ENCODE measurements at regions of chr10 and their contacts with region 1.

Region 1: GRCh38 chr10:132446661-132447194 is 49.7 kb downstream of the PWWP2B start:
- DNase-seq: peak; percentile 91
- H3K4me3 Mint-ChIP-seq: peak overlapping the region; percentile 67
- H3K27ac Mint-ChIP-seq: peak overlapping the region; percentile 94
- H3K4me1 Mint-ChIP-seq: peaks cover 30% of the 10 kb centered on the region
- H3K27me3 Mint-ChIP-seq: no peaks in the 10 kb centered on the region

Region 2: GRCh38 chr10:131694781-131695495 is 751.8 kb before region 1 on chr10:
- CTCF ChIA-PET with region 1: no interaction called
- POLR2A ChIA-PET with region 1: no interaction called
- intact Hi-C with region 1: no loop called
- DNase-seq: no peak
- H3K4me3 Mint-ChIP-seq: no peak overlapping the region
- H3K27ac Mint-ChIP-seq: no peak overlapping the region
- H3K4me1 Mint-ChIP-seq: no peaks in the 10 kb centered on the region
- H3K27me3 Mint-ChIP-seq: peaks cover 3% of the 10 kb centered on the region

Region 3: DNA sequence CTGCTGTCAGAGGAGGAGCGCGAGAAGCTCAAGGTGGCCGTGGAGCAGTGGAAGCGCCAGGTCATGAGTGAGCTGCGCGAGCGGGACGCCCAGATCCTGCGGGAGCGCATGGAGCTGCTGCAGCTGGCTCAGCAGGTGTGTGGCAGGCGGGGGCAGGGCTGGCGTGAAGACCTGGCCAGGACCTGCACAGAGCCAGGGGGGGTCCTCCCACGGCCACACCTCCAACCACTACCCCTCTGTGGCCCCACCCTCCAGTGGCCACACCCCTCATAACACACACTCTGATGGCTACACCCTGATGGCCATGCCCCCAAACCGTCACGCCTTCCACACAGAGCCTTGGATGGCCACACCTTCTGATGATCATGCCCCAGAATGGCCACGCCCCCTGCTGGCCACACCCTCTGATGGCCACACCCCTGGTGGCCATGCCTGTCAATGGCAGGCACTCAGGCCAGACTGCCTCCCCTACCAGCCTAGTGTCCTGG is 283.4 kb before region 1 on chr10:
- CTCF ChIA-PET with region 1: no interaction called
- POLR2A ChIA-PET with region 1: no interaction called
- intact Hi-C with region 1: loop called (anchors 2 kb)
- DNase-seq: peak; percentile 80
- H3K4me3 Mint-ChIP-seq: no peak overlapping the region
- H3K27ac Mint-ChIP-seq: peak overlapping the region; percentile 9
- H3K4me1 Mint-ChIP-seq: peaks cover 30% of the 10 kb centered on the region
- H3K27me3 Mint-ChIP-seq: no peaks in the 10 kb centered on the region

Region 4: GRCh38 chr10:132307823-132308587 is 138.7 kb before region 1 on chr10 and contains the start of gene STK32C:
- CTCF ChIA-PET with region 1: interaction called, 3 read pairs
- POLR2A ChIA-PET with region 1: no interaction called
- intact Hi-C with region 1: loop called (anchors 2 kb)
- DNase-seq: peak; percentile 93
- H3K4me3 Mint-ChIP-seq: peak within 1 kb of the TSS; percentile 85
- H3K27ac Mint-ChIP-seq: no peak within 1 kb of the TSS
- H3K4me1 Mint-ChIP-seq: peaks cover 11% of the 10 kb centered on the region
- H3K27me3 Mint-ChIP-seq: peaks cover 3% of the 10 kb centered on the region
- total RNA-seq, gene STK32C: 14.8 to 16.1 TPM

Region 5: GRCh38 chr10:132387764-132388210 is 58.9 kb before region 1 on chr10:
- CTCF ChIA-PET with region 1: no interaction called
- POLR2A ChIA-PET with region 1: interaction called, 3 read pairs
- intact Hi-C with region 1: loop called (anchors 1 kb)
- DNase-seq: peak; percentile 81
- H3K4me3 Mint-ChIP-seq: peak overlapping the region; percentile 60
- H3K27ac Mint-ChIP-seq: peak overlapping the region; percentile 79
- H3K4me1 Mint-ChIP-seq: peaks cover 3% of the 10 kb centered on the region
- H3K27me3 Mint-ChIP-seq: peaks cover 2% of the 10 kb centered on the region

Region 6: DNA sequence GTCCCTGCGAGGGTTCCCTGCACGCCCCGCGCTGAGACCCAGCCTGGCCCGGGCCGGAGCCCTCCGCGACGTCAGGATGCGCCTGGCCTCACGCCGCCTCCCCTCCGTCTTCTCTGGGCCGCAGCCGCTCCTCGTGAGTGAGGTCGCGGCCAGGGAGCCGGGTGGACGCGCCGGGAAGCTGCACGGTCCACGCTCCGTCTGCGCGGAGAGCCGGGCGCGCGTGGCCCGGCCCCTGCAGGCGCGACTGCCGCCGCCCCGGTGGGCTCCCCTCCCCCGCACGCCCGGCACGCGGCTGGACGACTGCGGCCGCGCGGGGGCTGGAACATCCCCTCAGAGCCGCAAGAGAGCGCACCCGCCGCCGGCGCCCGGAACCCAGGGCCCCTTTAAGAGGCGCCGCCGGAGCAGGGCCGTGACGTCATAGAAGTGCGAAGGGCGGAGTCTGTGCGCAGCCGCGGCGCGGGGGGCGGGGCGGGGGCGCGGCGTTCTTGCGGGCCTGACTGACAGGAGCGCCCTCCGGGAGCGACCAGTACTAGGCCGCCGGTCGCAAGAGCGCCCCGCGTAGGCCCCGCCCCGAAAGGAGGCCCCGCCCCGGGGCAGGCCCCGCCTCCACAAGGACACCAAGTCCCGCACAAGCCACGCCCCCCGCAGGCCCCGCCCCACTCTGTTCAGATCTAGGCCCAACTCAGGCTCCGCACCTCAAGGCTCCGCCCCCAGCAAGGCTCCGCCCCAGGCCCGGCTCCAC is 90.4 kb after region 1 on chr10:
- CTCF ChIA-PET with region 1: no interaction called
- POLR2A ChIA-PET with region 1: no interaction called
- intact Hi-C with region 1: loop called (anchors 1 kb)
- DNase-seq: peak; percentile 100
- H3K4me3 Mint-ChIP-seq: peak overlapping the region; percentile 61
- H3K27ac Mint-ChIP-seq: no peak overlapping the region
- H3K4me1 Mint-ChIP-seq: peaks cover 46% of the 10 kb centered on the region
- H3K27me3 Mint-ChIP-seq: peaks cover 2% of the 10 kb centered on the region

Measured in activated CD4-positive, alpha-beta memory T cell treated with anti-CD3 and anti-CD28 coated beads for 36 hours (primary cell).